ENCODE measurements at regions of chr1 and their contacts with region 1.

Region 1: GRCh38 chr1:208245185-208245705 is 1.1 kb upstream of the PLXNA2 start:
- DNase-seq: peak; percentile 84 to 94
- ATAC-seq: peak; percentile 72 to 92 (median 82)
- H3K4me3 ChIP-seq: peak overlapping the region in 9 of 10 donors; percentile 74 to 98 (median 84)
- H3K27ac ChIP-seq: peak overlapping the region; percentile 84 to 98 (median 92)
- H3K4me1 ChIP-seq: peaks cover 0 to 52% (median 33%) of the 10 kb centered on the region in 9 donors
- H3K27me3 ChIP-seq: peaks cover 0 to 33% (median 0%) of the 10 kb centered on the region in 7 donors
- CTCF ChIP-seq: peak; percentile 75 to 91 (median 84)

Region 2: DNA sequence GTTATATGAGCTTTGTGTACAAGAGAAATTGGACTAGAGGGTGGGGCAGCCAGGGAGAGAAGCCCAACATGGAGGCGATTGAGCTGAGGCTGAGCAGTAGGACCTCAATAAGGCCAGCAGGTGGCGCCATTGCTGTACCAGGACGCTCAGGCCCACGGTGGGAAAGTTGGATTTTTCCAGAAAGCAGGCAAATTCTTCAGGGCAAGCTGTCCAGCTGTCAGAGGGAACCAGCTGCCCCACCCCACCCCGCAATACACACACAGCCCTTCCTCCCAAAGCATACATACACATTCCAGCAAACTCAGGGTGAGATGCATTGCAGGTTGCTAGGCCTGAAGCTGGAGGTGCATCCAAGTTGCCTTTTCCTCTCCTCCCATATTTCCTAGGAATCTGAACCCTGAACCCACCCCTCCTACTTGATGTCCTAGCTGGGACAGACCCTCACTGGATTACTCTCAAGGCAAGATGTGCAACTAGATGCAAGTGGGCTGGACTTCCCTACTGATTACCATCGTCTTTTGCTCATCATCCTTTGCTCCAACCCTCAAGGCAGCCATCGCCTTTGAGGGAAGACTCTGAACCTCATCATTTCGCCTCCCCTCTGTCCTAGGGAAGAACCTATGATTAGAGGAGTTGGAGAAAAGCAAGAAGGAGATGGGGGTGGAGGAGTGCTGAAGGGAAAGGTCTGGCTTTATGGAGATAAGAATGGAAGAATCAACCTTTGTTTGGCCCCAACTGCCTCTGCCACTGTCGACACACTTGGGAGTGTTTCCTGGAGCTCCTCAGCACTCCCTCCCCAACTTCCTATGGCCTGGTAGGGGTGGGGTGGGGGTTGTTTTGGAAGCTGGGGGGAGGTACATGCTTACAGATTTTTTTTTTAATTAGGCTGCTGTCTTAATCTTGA is 359.9 kb before region 1 on chr1:
- intact Hi-C with region 1: loop called in 1 of 10 experiments (anchors 5 kb)
- DNase-seq: peak; percentile 84 to 90
- ATAC-seq: peak; percentile 82 to 92 (median 90)
- H3K4me3 ChIP-seq: no peak overlapping the region
- H3K27ac ChIP-seq: peak overlapping the region in 9 of 10 donors; percentile 39 to 98 (median 85)
- H3K4me1 ChIP-seq: peaks cover 18 to 86% (median 79%) of the 10 kb centered on the region in 9 donors
- H3K27me3 ChIP-seq: no peaks in the 10 kb centered on the region
- CTCF ChIP-seq: peak; percentile 90 to 98 (median 97)

Region 3: GRCh38 chr1:208029381-208030287 is 215.6 kb before region 1 on chr1:
- intact Hi-C with region 1: loop called in 6 of 10 experiments (anchors 5 kb)
- DNase-seq: peak in 1 of 2 donors; percentile 44
- ATAC-seq: peak; percentile 55 to 77 (median 66)
- H3K4me3 ChIP-seq: peak overlapping the region in 3 of 10 donors; percentile 9 to 13 (median 11)
- H3K27ac ChIP-seq: peak overlapping the region; percentile 48 to 90 (median 78)
- H3K4me1 ChIP-seq: peaks cover 0 to 48% (median 17%) of the 10 kb centered on the region in 9 donors
- H3K27me3 ChIP-seq: no peaks in the 10 kb centered on the region
- CTCF ChIP-seq: no peak

Region 4: DNA sequence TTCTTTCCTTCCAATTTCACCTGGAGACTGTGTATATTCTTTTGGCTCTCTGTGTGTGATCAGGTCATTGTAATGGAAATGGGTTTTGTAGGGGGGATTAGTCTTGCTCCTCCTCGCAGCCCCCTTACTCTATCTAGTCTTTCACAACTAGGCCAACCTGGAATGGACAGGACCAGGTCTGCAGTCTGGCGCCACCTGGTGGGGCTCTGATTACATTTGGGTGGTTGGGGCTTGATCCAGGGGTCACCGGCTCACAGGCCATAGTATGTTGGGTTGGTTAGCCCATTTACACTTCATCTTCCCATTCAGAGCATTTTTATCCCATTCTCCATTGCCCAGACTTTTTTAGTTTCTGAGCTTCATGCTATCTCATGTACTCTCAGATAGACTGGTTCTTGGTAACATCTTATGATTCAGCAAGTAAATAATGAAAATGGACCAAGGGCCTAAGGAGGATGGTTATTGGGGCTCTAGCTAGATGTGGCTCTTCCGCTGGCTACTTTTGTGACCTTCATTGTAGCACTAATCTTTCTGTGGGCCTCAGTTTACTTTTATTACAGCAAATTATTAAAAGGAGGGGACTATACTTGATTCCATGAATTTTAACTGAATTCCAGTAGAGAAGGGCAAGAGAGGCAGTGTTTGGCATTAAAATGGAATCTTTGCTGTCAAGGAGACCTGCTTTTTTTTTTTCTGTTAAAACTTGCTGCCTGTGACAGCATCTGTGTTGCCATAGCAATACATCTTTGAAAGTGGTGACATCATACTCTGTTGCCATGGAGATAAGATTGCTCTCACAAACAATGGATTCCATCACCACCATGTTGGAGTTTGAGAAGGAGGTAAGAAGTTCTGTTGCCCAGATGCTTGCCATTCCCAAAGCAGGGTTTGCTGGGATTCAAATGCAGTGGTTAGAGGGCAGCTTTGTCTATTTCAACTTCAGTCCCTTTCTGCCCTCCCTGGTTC is 151.2 kb before region 1 on chr1:
- intact Hi-C with region 1: loop called in 2 of 10 experiments (anchors 5 kb)
- DNase-seq: peak; percentile 67 to 74
- ATAC-seq: peak in 7 of 8 donors; percentile 35 to 70 (median 62)
- H3K4me3 ChIP-seq: no peak overlapping the region
- H3K27ac ChIP-seq: no peak overlapping the region
- H3K4me1 ChIP-seq: peaks cover 0 to 23% (median 20%) of the 10 kb centered on the region in 9 donors
- H3K27me3 ChIP-seq: no peaks in the 10 kb centered on the region
- CTCF ChIP-seq: peak; percentile 68 to 85 (median 78)

Region 5: GRCh38 chr1:208132287-208132883 is 112.9 kb before region 1 on chr1:
- intact Hi-C with region 1: loop called in 6 of 10 experiments (anchors 2 to 5 kb)
- DNase-seq: peak; percentile 85 to 87
- ATAC-seq: peak; percentile 82 to 96 (median 90)
- H3K4me3 ChIP-seq: no peak overlapping the region
- H3K27ac ChIP-seq: peak overlapping the region in 1 of 10 donors; percentile 9
- H3K4me1 ChIP-seq: peaks cover 6 to 48% (median 21%) of the 10 kb centered on the region in 9 donors
- H3K27me3 ChIP-seq: peaks cover 0 to 4% (median 0%) of the 10 kb centered on the region in 7 donors
- CTCF ChIP-seq: peak; percentile 61 to 93 (median 84)

Region 6: DNA sequence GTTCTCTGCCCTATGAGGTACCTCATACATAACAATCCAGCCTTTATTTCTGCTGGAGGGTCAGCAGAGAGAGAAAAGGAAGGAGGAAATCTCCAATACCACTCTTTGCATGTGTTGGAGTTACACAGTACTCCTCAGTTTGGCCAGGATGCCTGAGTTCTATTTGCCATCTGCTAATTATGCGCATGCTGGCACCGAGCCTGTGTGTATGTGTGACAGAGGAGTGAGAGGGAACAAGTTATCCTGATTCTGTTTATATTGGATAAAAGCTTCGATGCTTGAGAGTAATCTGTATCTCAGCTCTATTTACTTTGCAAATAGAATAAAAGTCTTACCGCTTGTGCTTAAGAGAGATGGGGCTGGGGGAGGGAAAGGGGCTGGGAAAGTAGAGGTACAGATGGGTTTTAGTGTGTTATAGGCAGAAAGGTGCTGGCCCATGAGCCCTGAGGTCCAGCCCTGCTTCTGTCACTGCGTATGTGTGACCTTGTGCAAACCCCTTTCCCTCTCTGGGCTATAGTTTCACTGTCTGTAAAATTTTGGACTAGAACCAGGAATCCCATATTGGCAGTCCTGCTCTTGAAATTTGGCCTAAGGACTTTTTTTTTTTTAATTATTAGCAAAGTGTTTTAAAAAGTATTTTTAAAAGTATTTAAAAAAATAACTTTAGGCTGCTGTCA is 53.5 kb after region 1 on chr1:
- intact Hi-C with region 1: no loop called
- DNase-seq: peak in 1 of 2 donors; percentile 13
- ATAC-seq: no peak
- H3K4me3 ChIP-seq: no peak overlapping the region
- H3K27ac ChIP-seq: no peak overlapping the region
- H3K4me1 ChIP-seq: no peaks in the 10 kb centered on the region
- H3K27me3 ChIP-seq: peaks cover 0 to 34% (median 7%) of the 10 kb centered on the region in 7 donors
- CTCF ChIP-seq: no peak

Region 7: GRCh38 chr1:208461680-208462079 is 216.4 kb after region 1 on chr1:
- intact Hi-C with region 1: no loop called
- DNase-seq: no peak
- ATAC-seq: no peak
- H3K4me3 ChIP-seq: no peak overlapping the region
- H3K27ac ChIP-seq: no peak overlapping the region
- H3K4me1 ChIP-seq: no peaks in the 10 kb centered on the region
- H3K27me3 ChIP-seq: peaks cover 0 to 6% (median 0%) of the 10 kb centered on the region in 7 donors
- CTCF ChIP-seq: peak in 2 of 9 donors; percentile 7 to 34